ENCODE measurements at regions of chr16 and their contacts with region 1.

Region 1: DNA sequence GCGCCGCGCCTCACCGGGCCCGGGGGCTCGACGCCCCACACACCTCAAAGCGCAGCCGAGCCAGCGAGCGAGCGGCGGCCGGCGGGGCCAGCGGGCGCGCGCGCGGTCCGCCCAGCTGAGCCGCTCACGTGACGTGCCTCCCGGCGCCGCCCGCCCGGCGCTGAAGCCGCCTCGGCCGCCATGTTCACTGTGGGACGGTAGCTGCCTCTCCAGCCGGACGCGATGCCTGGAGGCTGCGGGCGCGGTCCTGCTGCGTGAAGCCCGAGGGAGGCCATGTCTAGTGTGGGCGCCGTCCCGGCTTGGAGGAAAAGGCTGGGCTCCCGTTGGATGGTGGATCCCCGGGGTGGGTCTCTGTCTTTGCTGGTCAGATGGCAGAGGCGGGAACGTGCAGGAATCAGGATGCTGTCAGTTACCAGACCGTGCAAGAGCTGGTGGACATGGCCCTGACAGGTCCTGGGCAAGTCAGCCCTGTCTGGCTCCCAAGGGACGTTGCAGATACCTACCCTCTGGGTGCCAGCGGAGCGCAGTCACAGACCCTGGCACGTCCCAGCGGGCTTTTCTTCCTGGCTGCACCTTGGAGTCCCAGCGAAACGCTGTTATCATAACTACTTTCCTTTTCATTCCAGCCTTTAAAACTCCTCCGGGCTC is at the start of gene USP31:
- DNase-seq: peak; percentile 96 to 97
- ATAC-seq: peak; percentile 98 to 100 (median 100)
- H3K4me3 ChIP-seq: peak within 1 kb of the TSS; percentile 37 to 92 (median 78)
- H3K27ac ChIP-seq: peak within 1 kb of the TSS; percentile 73 to 96 (median 84)
- H3K4me1 ChIP-seq: peaks cover 3 to 46% (median 40%) of the 10 kb centered on the region in 9 donors
- H3K27me3 ChIP-seq: peaks cover 0 to 3% (median 0%) of the 10 kb centered on the region in 7 donors
- CTCF ChIP-seq: no peak
- total RNA-seq, gene USP31: 19.0 to 32.1 (median 23.2) TPM

Region 2: DNA sequence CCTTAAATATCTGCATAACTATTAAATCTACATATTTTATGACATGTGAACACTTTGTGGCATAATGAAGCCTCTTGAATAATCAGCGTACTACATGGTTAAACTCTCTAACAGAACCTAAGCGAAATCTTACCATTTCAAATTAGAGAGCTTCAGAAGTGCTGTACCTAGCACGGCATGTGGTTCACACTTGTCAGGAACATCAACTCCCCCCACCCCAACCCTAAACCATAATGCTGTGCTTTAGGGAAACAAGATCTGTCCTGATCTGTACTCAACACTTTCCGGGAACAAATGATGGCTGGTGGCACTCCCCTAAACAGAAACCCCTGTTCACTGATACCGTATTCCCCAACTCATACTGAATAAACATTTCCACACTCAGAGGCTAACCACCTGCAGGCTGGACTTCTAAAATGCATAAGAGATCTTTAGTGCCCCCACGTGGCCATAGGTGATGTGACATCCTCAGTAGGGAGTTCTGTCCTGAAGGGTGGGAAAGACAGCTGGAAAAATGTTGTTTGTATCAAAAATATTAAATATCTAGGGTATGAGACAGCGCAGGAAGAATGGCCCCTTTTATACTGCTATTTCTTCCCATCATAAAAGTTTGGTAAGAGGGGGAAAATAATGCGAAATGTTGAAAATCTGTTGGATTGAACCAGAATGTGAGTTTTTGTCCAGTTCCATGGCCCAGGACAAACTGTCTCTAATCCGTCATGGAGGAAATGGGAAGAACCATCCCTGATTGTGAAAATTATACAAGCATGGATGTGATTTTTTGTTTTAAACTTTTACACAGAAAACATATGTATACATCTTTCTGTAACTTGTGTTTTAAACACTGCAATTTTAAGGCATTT is 88.8 kb before region 1 on chr16:
- intact Hi-C with region 1: loop called in 1 of 10 experiments (anchors 10 kb)
- DNase-seq: peak in 1 of 2 donors; percentile 71
- ATAC-seq: peak; percentile 65 to 89 (median 82)
- H3K4me3 ChIP-seq: no peak overlapping the region
- H3K27ac ChIP-seq: no peak overlapping the region
- H3K4me1 ChIP-seq: peaks cover 0 to 13% (median 8%) of the 10 kb centered on the region in 9 donors
- H3K27me3 ChIP-seq: no peaks in the 10 kb centered on the region
- CTCF ChIP-seq: peak; percentile 63 to 90 (median 85)

Region 3: DNA sequence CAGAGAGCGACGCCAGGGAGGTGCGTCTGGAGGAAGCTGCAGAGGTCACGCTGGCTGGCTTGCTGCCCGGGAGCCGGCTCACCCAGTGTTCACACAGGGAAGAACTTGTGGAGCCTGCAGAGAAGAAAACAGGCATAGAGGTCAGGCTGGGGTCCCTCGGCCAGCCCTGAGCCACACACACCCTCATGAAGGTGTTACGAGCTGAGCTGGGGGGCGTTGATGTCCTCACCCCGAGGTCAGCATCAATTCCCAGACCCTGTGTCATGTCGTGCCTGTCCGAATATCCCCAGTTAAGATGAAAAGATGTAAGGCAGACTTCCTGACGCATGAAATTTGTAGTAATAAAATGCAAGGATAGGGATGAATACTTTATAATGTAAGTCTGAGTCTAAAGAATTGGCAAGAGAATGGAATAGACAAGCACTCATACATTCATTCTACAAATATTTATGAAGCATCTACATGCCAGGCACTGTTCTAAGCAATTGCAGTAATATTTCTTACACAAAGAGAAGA is 77.3 kb before region 1 on chr16:
- intact Hi-C with region 1: loop called in 6 of 10 experiments (anchors 2 to 10 kb)
- DNase-seq: peak; percentile 90
- ATAC-seq: peak; percentile 80 to 93 (median 87)
- H3K4me3 ChIP-seq: peak overlapping the region in 3 of 10 donors; percentile 9 to 20 (median 13)
- H3K27ac ChIP-seq: peak overlapping the region; percentile 41 to 95 (median 83)
- H3K4me1 ChIP-seq: peaks cover 12 to 58% (median 45%) of the 10 kb centered on the region in 9 donors
- H3K27me3 ChIP-seq: no peaks in the 10 kb centered on the region
- CTCF ChIP-seq: no peak

Region 4: DNA sequence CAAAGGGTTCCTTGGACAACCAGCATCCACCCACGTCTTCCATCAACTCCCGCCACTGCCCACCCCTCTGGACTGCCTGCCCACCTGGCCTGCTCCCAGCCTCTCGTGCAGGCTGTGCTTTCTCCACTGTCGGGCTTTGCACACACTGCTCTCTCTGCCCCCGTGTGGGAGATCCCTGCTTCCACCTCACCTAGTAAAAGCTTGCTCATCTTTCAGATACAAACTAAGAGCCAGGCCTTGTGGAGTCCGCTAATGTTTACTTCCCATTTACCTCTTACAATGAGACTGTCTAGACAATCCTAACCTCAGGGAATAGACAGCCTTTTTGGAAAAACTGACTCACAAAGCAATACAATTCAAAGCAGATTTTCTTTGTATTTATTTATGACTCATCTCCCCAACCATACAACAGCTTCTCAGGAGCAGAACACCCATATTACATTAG is 67.8 kb before region 1 on chr16:
- intact Hi-C with region 1: loop called in 2 of 10 experiments (anchors 5 to 10 kb)
- DNase-seq: no peak
- ATAC-seq: peak in 6 of 8 donors; percentile 19 to 80 (median 58)
- H3K4me3 ChIP-seq: no peak overlapping the region
- H3K27ac ChIP-seq: peak overlapping the region in 2 of 10 donors; percentile 22 to 51
- H3K4me1 ChIP-seq: peaks cover 0 to 41% (median 8%) of the 10 kb centered on the region in 9 donors
- H3K27me3 ChIP-seq: no peaks in the 10 kb centered on the region
- CTCF ChIP-seq: no peak

Measured in heart right ventricle (tissue), 16 donors.